T-cell (primary cell): ENCODE measurements at regions of chr14 and their contacts with region 1.

Region 1: DNA sequence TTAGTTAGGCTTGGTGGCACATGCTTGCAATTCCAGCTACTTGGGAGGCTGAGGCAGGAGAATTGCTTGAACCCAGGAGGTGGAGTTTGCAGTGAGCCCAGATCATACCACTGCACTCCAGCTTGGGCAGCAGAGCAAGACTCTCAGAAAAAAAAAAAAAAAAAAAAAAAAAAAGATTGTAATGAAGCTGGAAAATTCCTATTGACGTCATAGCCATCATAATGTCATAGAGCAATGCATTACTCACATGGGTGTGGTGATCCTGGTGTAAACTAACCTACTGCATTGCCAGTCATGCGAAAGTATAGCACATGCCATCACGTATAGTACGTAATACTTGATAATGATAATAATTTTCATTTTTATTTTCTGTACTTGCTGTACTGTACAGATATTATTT is 42.7 kb upstream of the NID2 start:
- DNase-seq: no peak
- ATAC-seq: no peak
- H3K4me3 ChIP-seq: no peak overlapping the region
- H3K4me3 Mint-ChIP-seq: no peak overlapping the region
- H3K27ac ChIP-seq: no peak overlapping the region
- H3K27ac Mint-ChIP-seq: no peak overlapping the region
- H3K4me1 ChIP-seq: no peaks in the 10 kb centered on the region
- H3K4me1 Mint-ChIP-seq: no peaks in the 10 kb centered on the region
- H3K27me3 ChIP-seq: no peaks in the 10 kb centered on the region
- H3K27me3 Mint-ChIP-seq: peaks cover 0 to 5% of the 10 kb centered on the region in 2 donors

Region 2: DNA sequence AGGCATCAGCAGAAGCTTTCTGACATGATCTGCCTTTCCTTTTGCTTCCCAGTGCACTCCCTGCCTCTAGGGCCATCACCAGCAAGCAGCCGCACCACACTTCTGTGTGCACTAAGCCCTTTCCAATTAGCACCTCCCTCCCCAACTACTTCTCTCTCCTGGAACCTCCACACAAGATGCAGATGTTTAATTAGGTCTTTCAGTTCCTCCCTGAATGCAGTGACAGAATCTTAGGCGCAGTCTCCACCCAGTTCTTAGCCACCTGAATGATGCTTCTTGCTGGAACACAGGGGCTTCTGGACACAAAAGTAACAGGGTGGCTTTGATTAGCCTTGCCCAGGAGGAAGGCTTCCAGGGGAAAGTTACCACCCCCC is 1313.5 kb before region 1 on chr14:
- CTCF ChIA-PET with region 1: no interaction called
- POLR2A ChIA-PET with region 1: no interaction called
- DNase-seq: no peak
- ATAC-seq: no peak
- H3K4me3 ChIP-seq: no peak overlapping the region
- H3K4me3 Mint-ChIP-seq: no peak overlapping the region
- H3K27ac ChIP-seq: no peak overlapping the region
- H3K27ac Mint-ChIP-seq: peak overlapping the region; percentile 40 to 46
- H3K4me1 ChIP-seq: peaks cover 14 to 20% of the 10 kb centered on the region in 2 experiments
- H3K4me1 Mint-ChIP-seq: peaks cover 57 to 67% (median 60%) of the 10 kb centered on the region in 3 donors
- H3K27me3 ChIP-seq: no peaks in the 10 kb centered on the region
- H3K27me3 Mint-ChIP-seq: no peaks in the 10 kb centered on the region

Region 3: GRCh38 chr14:52052288-52052943 is 59.1 kb before region 1 on chr14:
- CTCF ChIA-PET with region 1: no interaction called
- POLR2A ChIA-PET with region 1: no interaction called
- DNase-seq: no peak
- ATAC-seq: no peak
- H3K4me3 ChIP-seq: no peak overlapping the region
- H3K4me3 Mint-ChIP-seq: no peak overlapping the region
- H3K27ac ChIP-seq: no peak overlapping the region
- H3K27ac Mint-ChIP-seq: no peak overlapping the region
- H3K4me1 ChIP-seq: no peaks in the 10 kb centered on the region
- H3K4me1 Mint-ChIP-seq: no peaks in the 10 kb centered on the region
- H3K27me3 ChIP-seq: peaks cover 0 to 8% of the 10 kb centered on the region in 2 experiments
- H3K27me3 Mint-ChIP-seq: peaks cover 8 to 15% of the 10 kb centered on the region in 2 donors

Region 4: GRCh38 chr14:52080817-52081755 is 30.5 kb before region 1 on chr14:
- CTCF ChIA-PET with region 1: interaction called in 1 of 2 experiments, 11 read pairs
- POLR2A ChIA-PET with region 1: no interaction called
- DNase-seq: no peak
- ATAC-seq: no peak
- H3K4me3 ChIP-seq: no peak overlapping the region
- H3K4me3 Mint-ChIP-seq: no peak overlapping the region
- H3K27ac ChIP-seq: no peak overlapping the region
- H3K27ac Mint-ChIP-seq: no peak overlapping the region
- H3K4me1 ChIP-seq: no peaks in the 10 kb centered on the region
- H3K4me1 Mint-ChIP-seq: no peaks in the 10 kb centered on the region
- H3K27me3 ChIP-seq: no peaks in the 10 kb centered on the region
- H3K27me3 Mint-ChIP-seq: peaks cover 9 to 19% of the 10 kb centered on the region in 2 donors

Region 5: GRCh38 chr14:52142504-52142903 is 30.9 kb after region 1 on chr14:
- CTCF ChIA-PET with region 1: no interaction called
- POLR2A ChIA-PET with region 1: interaction called in 1 of 2 experiments, 11 read pairs
- DNase-seq: no peak
- ATAC-seq: no peak
- H3K4me3 ChIP-seq: no peak overlapping the region
- H3K4me3 Mint-ChIP-seq: no peak overlapping the region
- H3K27ac ChIP-seq: no peak overlapping the region
- H3K27ac Mint-ChIP-seq: no peak overlapping the region
- H3K4me1 ChIP-seq: no peaks in the 10 kb centered on the region
- H3K4me1 Mint-ChIP-seq: peaks cover 0 to 12% (median 7%) of the 10 kb centered on the region in 3 donors
- H3K27me3 ChIP-seq: no peaks in the 10 kb centered on the region
- H3K27me3 Mint-ChIP-seq: peaks cover 2 to 4% of the 10 kb centered on the region in 2 donors